PC-9 (cell line): ENCODE measurements at regions of chr1 and their contacts with region 1.

Region 1: GRCh38 chr1:185670187-185670627 is 64.0 kb upstream of the HMCN1 start:
- DNase-seq: peak in 1 of 2 experiments; percentile 17
- H3K4me3 ChIP-seq: no peak overlapping the region
- H3K27ac ChIP-seq: no peak overlapping the region
- H3K4me1 ChIP-seq: no peaks in the 10 kb centered on the region
- H3K27me3 ChIP-seq: no peaks in the 10 kb centered on the region
- CTCF ChIP-seq: peak; percentile 36; the same call in 1 of the 2 replicates

Region 2: DNA sequence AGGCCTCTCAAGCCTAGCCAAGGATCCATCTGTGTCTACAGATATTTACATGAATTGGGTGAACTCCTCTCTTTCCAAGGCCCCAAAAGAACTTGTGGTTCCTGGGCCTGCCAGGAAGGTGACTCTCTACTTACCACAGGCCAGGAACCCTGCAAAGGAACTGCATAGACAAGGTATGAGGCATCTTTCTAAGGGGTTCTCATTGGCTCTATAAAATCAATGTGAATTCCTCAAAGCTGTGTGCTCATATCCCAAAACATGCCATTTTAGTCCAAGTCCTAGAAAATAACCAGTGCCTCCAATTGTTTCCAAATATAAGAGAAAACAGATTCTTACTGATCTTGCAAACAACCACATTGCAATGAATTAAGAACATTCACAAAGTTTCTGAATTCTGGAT is 1905.2 kb before region 1 on chr1:
- CTCF ChIA-PET with region 1: no interaction called
- POLR2A ChIA-PET with region 1: no interaction called
- intact Hi-C with region 1: no loop called
- DNase-seq: no peak
- H3K4me3 ChIP-seq: no peak overlapping the region
- H3K27ac ChIP-seq: no peak overlapping the region
- H3K4me1 ChIP-seq: no peaks in the 10 kb centered on the region
- H3K27me3 ChIP-seq: no peaks in the 10 kb centered on the region
- CTCF ChIP-seq: no peak

Region 3: GRCh38 chr1:184982002-184982954 is 687.9 kb before region 1 on chr1:
- CTCF ChIA-PET with region 1: no interaction called
- POLR2A ChIA-PET with region 1: no interaction called
- intact Hi-C with region 1: loop called (anchors 5 kb)
- DNase-seq: peak in 1 of 2 experiments; percentile 63
- H3K4me3 ChIP-seq: no peak overlapping the region
- H3K27ac ChIP-seq: no peak overlapping the region
- H3K4me1 ChIP-seq: no peaks in the 10 kb centered on the region
- H3K27me3 ChIP-seq: no peaks in the 10 kb centered on the region
- CTCF ChIP-seq: peak; percentile 92

Region 4: DNA sequence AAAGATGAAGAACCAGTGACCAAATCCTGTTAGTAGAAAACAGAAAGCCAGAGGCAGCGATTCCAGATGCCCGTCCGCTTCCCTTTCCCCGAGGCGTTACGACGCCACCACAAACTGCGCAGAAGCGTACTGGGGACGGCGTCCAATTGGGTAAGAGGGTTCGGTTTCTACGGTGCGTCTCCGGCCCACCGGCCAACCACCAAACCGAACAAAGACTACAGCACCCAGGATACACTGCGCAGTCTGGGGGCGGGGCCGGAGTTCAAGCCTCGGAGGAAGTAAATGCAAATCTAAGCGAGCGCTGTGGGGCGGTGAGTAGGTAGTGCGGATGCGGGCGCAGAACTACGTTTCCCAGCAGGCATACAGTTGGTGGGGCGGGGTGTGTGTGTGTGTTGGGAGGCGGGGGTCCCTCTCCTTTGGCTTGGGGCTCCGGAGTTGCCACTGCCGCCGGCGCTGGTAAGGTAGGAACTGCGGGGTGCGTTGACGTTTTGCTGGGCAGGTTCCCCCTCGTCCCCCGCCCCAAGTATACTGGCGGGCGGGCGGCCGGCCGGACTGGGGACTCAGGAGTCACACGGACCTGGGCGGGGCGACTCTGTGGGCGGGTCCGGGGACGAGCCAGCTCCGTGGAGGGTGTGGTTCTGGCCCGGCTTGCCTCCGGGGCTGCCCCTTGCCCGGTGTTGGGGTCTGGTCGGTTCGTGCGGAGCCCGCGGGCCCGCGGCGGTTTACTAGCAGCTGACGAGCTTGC is 513.2 kb before region 1 on chr1 and contains the starts of genes SWT1 and TRMT1L:
- CTCF ChIA-PET with region 1: no interaction called
- POLR2A ChIA-PET with region 1: no interaction called
- intact Hi-C with region 1: loop called (anchors 5 kb)
- DNase-seq: peak; percentile 95 to 98
- H3K4me3 ChIP-seq: peak within 1 kb of the TSS; percentile 82
- H3K27ac ChIP-seq: peak within 1 kb of the TSS; percentile 55
- H3K4me1 ChIP-seq: peaks cover 21% of the 10 kb centered on the region
- H3K27me3 ChIP-seq: no peaks in the 10 kb centered on the region
- CTCF ChIP-seq: no peak
- total RNA-seq, gene SWT1: 2.9 and 3.6 TPM in 2 replicates
- total RNA-seq, gene TRMT1L: 16.9 and 18.3 TPM in 2 replicates

Region 5: DNA sequence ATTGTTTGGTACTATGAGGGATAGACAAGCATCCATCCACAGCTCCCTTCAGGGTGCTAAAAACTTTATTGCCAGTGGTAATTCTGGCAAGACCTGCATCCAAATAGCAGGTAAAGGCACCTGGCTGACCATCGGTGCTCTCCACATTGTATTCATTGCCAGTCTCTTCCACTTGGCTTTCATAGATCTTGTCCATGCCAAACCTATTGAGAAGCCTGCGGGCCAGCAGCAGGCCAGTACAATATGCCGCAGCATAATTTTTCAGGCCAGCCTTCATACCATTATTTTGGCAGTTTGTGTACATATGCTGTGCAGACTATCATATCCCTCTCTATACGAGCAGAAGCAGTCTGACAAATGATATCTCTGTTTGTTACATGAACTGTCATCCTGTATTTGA is 443.0 kb before region 1 on chr1:
- CTCF ChIA-PET with region 1: no interaction called
- POLR2A ChIA-PET with region 1: no interaction called
- intact Hi-C with region 1: no loop called
- DNase-seq: no peak
- H3K4me3 ChIP-seq: no peak overlapping the region
- H3K27ac ChIP-seq: no peak overlapping the region
- H3K4me1 ChIP-seq: no peaks in the 10 kb centered on the region
- H3K27me3 ChIP-seq: no peaks in the 10 kb centered on the region
- CTCF ChIP-seq: no peak

Region 6: GRCh38 chr1:185238447-185238846 is 431.8 kb before region 1 on chr1:
- CTCF ChIA-PET with region 1: interaction called, 17 read pairs
- POLR2A ChIA-PET with region 1: no interaction called
- intact Hi-C with region 1: no loop called
- DNase-seq: no peak
- H3K4me3 ChIP-seq: no peak overlapping the region
- H3K27ac ChIP-seq: no peak overlapping the region
- H3K4me1 ChIP-seq: no peaks in the 10 kb centered on the region
- H3K27me3 ChIP-seq: no peaks in the 10 kb centered on the region
- CTCF ChIP-seq: peak; percentile 53

Region 7: DNA sequence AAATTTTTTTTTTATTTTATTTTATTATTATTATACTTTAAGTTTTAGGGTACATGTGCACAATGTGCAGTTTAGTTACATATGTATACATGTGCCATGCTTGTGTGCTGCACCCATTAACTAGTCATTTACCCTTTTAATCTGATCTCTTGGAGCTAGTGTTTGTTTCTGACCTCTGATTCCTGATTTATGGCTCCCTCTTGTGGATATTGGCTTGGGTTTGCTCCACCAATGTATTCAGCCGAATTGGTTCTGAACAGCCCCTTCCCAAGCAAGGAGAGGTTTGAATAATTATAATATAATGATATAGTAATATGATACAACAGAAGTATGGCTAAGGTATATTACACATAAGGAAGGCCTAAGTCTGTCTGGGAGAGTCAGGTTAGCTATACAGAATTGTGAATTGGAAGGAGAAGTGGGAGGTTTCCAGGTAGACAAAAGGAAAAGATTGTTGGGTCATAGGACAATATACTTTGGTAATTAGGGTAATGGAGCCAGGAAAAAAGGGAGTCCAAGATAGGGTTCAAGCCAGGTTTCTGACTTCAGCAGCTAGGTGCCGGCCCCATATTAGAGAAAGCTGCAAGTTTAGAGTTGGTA is 10.9 kb after region 1 on chr1:
- CTCF ChIA-PET with region 1: interaction called, 22 read pairs
- POLR2A ChIA-PET with region 1: no interaction called
- intact Hi-C with region 1: no loop called
- DNase-seq: peak in 1 of 2 experiments; percentile 16
- H3K4me3 ChIP-seq: no peak overlapping the region
- H3K27ac ChIP-seq: no peak overlapping the region
- H3K4me1 ChIP-seq: no peaks in the 10 kb centered on the region
- H3K27me3 ChIP-seq: no peaks in the 10 kb centered on the region
- CTCF ChIP-seq: peak; percentile 70